H1 (cell line): ENCODE measurements at regions of chr1 and their contacts with region 1.

Region 1: GRCh38 chr1:186738926-186739325 is 58.7 kb upstream of the PTGS2 start:
- DNase-seq: no peak
- H3K4me3 ChIP-seq: no peak overlapping the region
- H3K27ac ChIP-seq: no peak overlapping the region
- H3K4me1 ChIP-seq: no peaks in the 10 kb centered on the region
- H3K27me3 ChIP-seq: no peaks in the 10 kb centered on the region
- CTCF ChIP-seq: no peak
- EP300 ChIP-seq: no peak
- POLR2A ChIP-seq: no peak
- RAD21 ChIP-seq: no peak

Region 2: DNA sequence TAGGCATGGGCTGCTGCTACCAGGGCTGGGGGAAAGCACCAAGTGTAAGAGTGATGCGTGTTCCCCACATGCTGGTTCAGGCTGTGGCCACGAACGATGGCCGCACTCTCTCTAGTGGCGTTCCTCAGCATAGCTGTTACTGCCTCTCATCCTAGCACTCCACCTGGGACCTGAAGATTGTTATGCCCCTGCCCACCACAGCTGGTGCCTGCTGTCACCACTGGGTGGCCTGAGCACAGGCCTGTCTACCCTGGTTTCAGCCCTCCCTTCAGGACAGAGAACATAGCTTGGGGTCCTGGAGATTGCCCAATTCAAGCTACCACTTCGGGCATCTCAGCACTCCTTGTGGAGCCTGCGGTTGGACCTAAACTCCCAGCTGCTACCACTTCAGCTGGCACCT is 197.9 kb before region 1 on chr1:
- CTCF ChIA-PET with region 1: no interaction called
- POLR2A ChIA-PET with region 1: no interaction called
- DNase-seq: no peak
- H3K4me3 ChIP-seq: no peak overlapping the region
- H3K27ac ChIP-seq: no peak overlapping the region
- H3K4me1 ChIP-seq: no peaks in the 10 kb centered on the region
- H3K27me3 ChIP-seq: no peaks in the 10 kb centered on the region
- CTCF ChIP-seq: peak; percentile 18 to 24 (median 23); a peak in 3 of 4 replicates
- EP300 ChIP-seq: no peak
- POLR2A ChIP-seq: no peak
- RAD21 ChIP-seq: no peak

Region 3: DNA sequence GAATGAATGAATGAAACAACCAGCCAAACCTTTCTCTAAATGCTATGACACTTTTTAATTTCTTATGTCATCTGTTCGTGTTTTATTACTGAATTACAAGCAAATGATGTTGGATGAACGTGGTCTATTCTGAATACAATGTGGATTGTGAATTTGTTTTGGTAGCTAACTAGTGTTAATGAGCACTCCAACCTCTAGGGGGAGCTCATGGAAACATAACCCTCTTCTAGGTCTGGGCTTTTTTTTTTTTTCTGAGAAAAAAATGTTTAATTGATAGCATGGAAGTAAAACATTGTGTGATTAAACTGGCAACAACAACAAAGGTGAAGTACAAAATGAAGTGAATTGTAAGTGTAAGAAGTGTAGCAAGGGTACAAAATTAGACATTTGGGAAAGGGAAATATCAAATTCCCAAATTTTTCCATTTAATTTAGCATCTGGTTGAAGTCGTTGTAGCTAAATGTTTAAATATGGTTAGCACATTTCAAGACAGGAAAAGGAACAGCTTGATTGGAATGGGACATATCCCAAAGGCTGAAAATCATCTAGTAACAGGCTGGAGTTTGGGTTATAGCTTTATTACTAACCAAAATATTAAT is 16.1 kb before region 1 on chr1:
- CTCF ChIA-PET with region 1: interaction called, 10 read pairs
- POLR2A ChIA-PET with region 1: no interaction called
- DNase-seq: no peak
- H3K4me3 ChIP-seq: no peak overlapping the region
- H3K27ac ChIP-seq: no peak overlapping the region
- H3K4me1 ChIP-seq: no peaks in the 10 kb centered on the region
- H3K27me3 ChIP-seq: no peaks in the 10 kb centered on the region
- CTCF ChIP-seq: peak in 2 of 3 experiments; percentile 15 to 68; a peak in 2 of 4 replicates
- EP300 ChIP-seq: no peak
- POLR2A ChIP-seq: no peak
- RAD21 ChIP-seq: peak; percentile 44 to 51